ENCODE measurements at regions of chr11 and their contacts with region 1.

Region 1: DNA sequence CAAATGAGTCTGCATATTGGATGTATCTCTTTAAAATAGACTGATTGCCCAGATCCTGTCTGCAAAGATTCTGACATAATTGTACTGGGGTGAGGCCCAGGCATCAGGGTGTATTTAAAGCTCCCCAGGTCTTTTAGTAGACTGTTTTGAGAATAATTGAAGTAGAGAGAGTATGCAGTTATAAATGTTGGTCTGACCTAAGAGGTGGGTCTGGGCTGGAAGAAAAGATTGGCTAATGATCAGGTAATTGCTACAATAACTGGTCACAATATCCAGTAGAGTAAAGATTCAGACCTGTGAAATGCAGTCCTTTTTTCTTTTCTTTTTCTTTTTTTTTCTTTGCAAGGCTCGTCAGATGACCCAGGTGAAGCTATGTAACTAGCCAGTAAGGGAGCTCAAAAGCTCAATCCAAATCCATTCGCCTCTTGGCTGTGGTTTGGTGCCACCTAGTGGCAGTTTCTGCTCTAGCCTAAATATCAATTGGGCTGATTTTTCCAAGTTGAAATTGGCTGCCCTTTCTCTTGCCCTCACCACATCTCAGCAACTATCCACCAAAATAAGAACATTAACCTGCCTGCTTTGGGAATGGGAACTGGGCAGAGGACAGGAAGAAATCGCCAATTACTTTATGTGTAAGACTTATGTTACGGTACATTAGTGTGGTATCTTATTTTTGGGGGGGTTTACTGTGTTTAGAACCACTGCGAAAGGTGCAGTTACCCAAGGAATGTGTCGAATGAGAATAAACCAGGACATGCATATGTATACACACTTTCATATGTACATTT is 45.9 kb downstream of the ZNF143 start:
- DNase-seq: peak; percentile 64
- H3K27ac ChIP-seq: no peak overlapping the region
- CTCF ChIP-seq: peak; percentile 92

Region 2: GRCh38 chr11:9158898-9159391 is 347.7 kb before region 1 on chr11:
- CTCF ChIA-PET with region 1: no interaction called
- POLR2A ChIA-PET with region 1: no interaction called
- DNase-seq: peak; percentile 25
- H3K27ac ChIP-seq: no peak overlapping the region
- CTCF ChIP-seq: no peak

Region 3: DNA sequence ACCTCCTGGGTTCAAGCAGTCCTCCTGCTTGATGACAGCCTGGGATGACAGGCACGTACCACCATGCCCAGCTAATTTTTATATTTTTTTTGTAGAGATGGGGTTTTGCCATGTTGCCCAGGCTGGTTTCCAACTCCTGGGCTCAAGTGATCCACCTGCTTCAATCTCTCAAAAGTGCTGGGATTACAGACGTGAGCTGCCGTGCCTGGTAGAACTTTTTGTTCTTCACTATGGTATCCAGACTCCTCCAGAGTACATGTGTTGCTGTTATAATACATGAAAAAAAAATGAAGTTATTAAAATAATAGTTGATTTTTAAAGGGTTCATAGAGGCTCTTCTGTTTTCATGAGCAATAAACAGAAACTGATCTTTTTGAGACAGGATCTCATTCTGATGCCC is 16.3 kb before region 1 on chr11:
- CTCF ChIA-PET with region 1: interaction called, 11 read pairs
- POLR2A ChIA-PET with region 1: no interaction called
- DNase-seq: no peak
- H3K27ac ChIP-seq: no peak overlapping the region
- CTCF ChIP-seq: no peak

Region 4: GRCh38 chr11:9550191-9550628 is 43.5 kb after region 1 on chr11:
- CTCF ChIA-PET with region 1: no interaction called
- POLR2A ChIA-PET with region 1: no interaction called
- DNase-seq: no peak
- H3K27ac ChIP-seq: no peak overlapping the region
- CTCF ChIP-seq: no peak

Measured in RWPE1 (cell line).